Spleen (tissue), 13 donors: ENCODE measurements at regions of chr10 and their contacts with region 1.

Region 1: DNA sequence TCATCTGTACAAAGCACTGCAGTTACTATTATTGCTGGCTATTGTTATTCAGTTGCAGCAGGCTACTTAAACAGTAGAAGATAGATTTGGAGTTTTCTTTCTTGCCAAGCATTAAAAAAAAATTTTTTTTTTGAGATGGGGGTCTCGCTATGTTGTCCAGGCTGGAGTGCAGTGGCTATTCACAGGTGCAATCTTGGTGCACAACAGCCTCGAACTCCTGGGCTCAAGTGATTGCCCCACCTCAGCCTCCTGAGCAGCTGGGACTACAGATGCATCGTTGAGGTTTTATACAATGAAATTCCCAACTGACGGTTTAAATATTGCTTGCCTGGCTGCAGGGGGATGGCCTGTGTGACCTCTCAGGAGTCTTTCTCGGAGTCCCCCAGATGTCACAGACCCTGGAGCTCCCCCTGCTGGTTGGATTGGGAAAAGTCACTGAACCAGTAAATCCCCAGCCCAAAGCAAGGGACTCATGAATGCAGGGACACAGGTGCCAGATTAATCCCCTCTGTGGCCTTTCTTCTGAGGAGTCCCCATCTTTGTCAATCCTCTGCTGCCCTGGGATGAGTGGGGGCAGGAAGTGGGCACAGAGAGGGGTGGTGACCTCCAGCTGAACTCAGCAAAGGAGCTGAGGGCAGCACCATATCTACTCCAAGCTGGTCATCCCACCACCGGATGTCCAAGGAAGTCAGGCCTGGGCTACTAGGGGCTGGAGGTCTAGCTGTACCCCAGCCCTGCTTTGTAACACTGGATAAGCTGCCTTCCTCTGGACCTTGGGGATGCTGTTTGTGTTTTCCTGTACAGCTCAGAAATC is 149.6 kb downstream of the C10orf105 start:
- DNase-seq: peak; percentile 85
- H3K4me3 ChIP-seq: no peak overlapping the region
- H3K27ac ChIP-seq: no peak overlapping the region
- H3K4me1 ChIP-seq: no peaks in the 10 kb centered on the region
- H3K27me3 ChIP-seq: no peaks in the 10 kb centered on the region
- CTCF ChIP-seq: peak; percentile 70 to 91 (median 85)
- POLR2A ChIP-seq: no peak

Region 2: GRCh38 chr10:71244431-71245419 is 325.3 kb before region 1 on chr10:
- intact Hi-C with region 1: no loop called
- DNase-seq: no peak
- H3K4me3 ChIP-seq: peak overlapping the region in 1 of 8 donors; percentile 27
- H3K27ac ChIP-seq: peak overlapping the region in 7 of 8 donors; percentile 46 to 68 (median 59)
- H3K4me1 ChIP-seq: peaks cover 36 to 82% (median 60%) of the 10 kb centered on the region in 6 donors
- H3K27me3 ChIP-seq: peaks cover 0 to 58% (median 11%) of the 10 kb centered on the region in 7 donors
- CTCF ChIP-seq: no peak
- POLR2A ChIP-seq: no peak

Region 3: GRCh38 chr10:71314028-71314693 is 255.8 kb before region 1 on chr10:
- intact Hi-C with region 1: loop called (anchors 2 kb)
- DNase-seq: no peak
- H3K4me3 ChIP-seq: peak overlapping the region in 1 of 8 donors; percentile 15
- H3K27ac ChIP-seq: peak overlapping the region in 6 of 8 donors; percentile 26 to 70 (median 62)
- H3K4me1 ChIP-seq: peaks cover 5 to 41% (median 25%) of the 10 kb centered on the region in 6 donors
- H3K27me3 ChIP-seq: peaks cover 0 to 5% (median 0%) of the 10 kb centered on the region in 7 donors
- CTCF ChIP-seq: peak; percentile 57 to 93 (median 82)
- POLR2A ChIP-seq: no peak

Region 4: GRCh38 chr10:71396084-71396720 is 173.8 kb before region 1 on chr10:
- intact Hi-C with region 1: loop called (anchors 5 kb)
- DNase-seq: peak; percentile 83
- H3K4me3 ChIP-seq: peak overlapping the region; percentile 37 to 75 (median 48)
- H3K27ac ChIP-seq: peak overlapping the region in 1 of 8 donors; percentile 43
- H3K4me1 ChIP-seq: peaks cover 7 to 32% (median 18%) of the 10 kb centered on the region in 6 donors
- H3K27me3 ChIP-seq: peaks cover 3 to 88% (median 28%) of the 10 kb centered on the region in 7 donors
- CTCF ChIP-seq: peak in 10 of 11 experiments; percentile 26 to 77 (median 58)
- POLR2A ChIP-seq: no peak

Region 5: DNA sequence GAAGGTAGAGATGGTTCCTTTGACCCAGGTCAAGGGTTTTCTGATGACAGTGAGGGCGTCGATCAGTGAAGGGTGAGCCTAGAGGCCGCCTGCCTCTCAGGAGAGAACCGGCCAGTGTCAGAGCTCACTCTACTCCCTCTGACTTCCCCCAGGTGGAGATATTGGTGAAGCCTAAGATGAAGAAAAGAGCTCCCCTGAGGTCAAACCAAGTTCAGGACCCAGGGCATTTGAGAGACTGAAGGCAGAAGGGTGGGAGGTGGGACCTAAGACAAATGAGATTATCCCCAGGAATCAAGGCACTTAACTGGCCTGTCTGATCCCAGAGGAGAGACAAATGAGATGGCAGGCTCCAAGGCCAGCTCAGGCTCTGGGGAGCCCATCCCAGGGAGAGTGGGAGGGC is 68.6 kb before region 1 on chr10:
- intact Hi-C with region 1: no loop called
- DNase-seq: peak; percentile 43
- H3K4me3 ChIP-seq: no peak overlapping the region
- H3K27ac ChIP-seq: no peak overlapping the region
- H3K4me1 ChIP-seq: peaks cover 0 to 7% (median 2%) of the 10 kb centered on the region in 6 donors
- H3K27me3 ChIP-seq: no peaks in the 10 kb centered on the region
- CTCF ChIP-seq: no peak
- POLR2A ChIP-seq: no peak